ENCODE measurements at regions of chr1 and their contacts with region 1.

Region 1: GRCh38 chr1:205977402-205978014 is 25.7 kb downstream of the RAB7B start:
- H3K4me3 ChIP-seq: no peak overlapping the region
- H3K27ac ChIP-seq: no peak overlapping the region
- H3K4me1 ChIP-seq: no peaks in the 10 kb centered on the region
- CTCF ChIP-seq: peak; percentile 88

Region 2: GRCh38 chr1:205658943-205659581 is 318.4 kb before region 1 on chr1:
- CTCF ChIA-PET with region 1: interaction called, 82 read pairs
- POLR2A ChIA-PET with region 1: interaction called, 4 read pairs
- H3K4me3 ChIP-seq: no peak overlapping the region
- H3K27ac ChIP-seq: no peak overlapping the region
- H3K4me1 ChIP-seq: no peaks in the 10 kb centered on the region
- CTCF ChIP-seq: peak; percentile 87

Region 3: DNA sequence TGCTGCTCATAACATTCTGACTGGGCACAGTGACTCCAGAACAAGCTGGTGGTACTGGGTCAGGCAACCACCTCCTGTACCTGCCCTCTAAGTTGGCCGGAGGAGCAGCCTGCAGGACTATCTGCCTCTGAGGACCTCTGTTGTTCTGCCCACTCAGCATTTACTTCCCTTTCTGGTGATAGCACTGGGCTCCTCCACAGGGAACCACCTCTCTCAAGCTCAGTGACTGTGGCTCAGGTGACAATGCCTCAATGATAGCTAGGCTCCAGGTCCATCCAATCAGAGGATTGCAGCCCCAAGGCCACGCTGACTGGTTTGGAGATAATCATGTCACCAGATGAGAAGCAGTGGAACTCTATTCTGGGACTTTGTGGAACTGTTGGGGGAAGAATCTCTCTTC is 180.3 kb before region 1 on chr1:
- CTCF ChIA-PET with region 1: interaction called, 155 read pairs
- POLR2A ChIA-PET with region 1: no interaction called
- H3K4me3 ChIP-seq: no peak overlapping the region
- H3K27ac ChIP-seq: no peak overlapping the region
- H3K4me1 ChIP-seq: no peaks in the 10 kb centered on the region
- CTCF ChIP-seq: no peak

Region 4: DNA sequence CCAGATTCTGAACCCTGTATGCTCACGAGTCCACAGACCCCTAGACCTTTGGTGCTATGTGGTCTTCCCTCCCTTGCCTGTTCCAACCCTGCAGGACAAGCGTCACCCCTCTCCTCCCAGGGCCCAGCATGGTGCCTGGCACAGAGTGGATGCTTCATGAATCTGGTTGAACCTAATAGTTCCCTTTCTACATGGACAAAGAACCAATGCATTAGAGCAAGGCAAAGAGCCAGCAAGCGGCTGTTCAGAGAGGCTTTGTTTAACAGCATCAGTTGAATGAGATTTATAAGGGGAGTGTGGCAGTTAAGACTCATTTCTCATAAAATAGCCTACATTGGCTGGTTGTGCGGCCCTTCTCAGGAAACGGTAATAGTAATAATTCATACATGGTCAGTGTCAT is 49.2 kb before region 1 on chr1:
- CTCF ChIA-PET with region 1: interaction called, 527 read pairs
- POLR2A ChIA-PET with region 1: interaction called, 3 read pairs
- H3K4me3 ChIP-seq: no peak overlapping the region
- H3K27ac ChIP-seq: no peak overlapping the region
- H3K4me1 ChIP-seq: no peaks in the 10 kb centered on the region
- CTCF ChIP-seq: no peak

Region 5: DNA sequence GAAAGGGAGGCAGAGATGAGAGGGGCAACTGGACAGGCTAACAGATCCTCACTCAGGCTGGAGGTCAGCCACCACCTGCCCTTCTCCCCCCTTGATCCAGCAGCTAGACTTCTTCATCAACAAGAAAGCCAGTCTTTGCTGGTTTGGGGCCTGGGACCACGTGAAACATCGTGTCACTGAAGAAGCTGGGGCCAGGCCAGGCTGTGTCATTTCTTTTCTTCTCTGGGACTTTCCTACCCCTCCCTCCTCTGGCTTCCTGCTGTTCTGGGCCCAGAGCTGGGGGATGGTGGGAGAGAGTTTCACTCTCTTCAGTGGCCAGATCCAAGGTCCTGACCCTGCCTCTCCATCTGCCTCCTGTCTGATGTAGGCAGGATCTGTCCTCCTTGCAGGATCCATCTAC is 16.1 kb before region 1 on chr1:
- CTCF ChIA-PET with region 1: interaction called, 39 read pairs
- POLR2A ChIA-PET with region 1: no interaction called
- H3K4me3 ChIP-seq: no peak overlapping the region
- H3K27ac ChIP-seq: peak overlapping the region; percentile 22; the same call in 1 of the 2 replicates
- H3K4me1 ChIP-seq: peaks cover 9% of the 10 kb centered on the region
- CTCF ChIP-seq: no peak

Region 6: DNA sequence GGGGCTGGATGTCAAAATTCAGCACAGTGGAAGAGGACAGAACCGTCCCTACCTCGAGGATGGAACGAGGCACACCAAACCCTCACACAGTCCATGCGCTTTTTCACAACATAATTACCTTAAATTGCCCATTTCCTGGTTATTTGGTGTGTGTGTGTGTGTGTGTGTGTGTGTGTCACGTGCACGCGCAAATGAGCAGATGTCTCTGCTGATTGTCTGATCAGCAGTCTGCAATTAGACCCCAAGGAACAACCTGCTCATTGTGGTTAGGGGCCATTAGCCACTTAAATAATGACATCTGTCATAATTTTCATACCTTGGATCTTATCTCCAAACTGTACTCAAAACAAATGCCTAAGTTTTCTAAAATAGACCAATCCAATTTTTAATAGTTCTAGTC is 116.5 kb after region 1 on chr1:
- CTCF ChIA-PET with region 1: interaction called, 18 read pairs
- POLR2A ChIA-PET with region 1: no interaction called
- H3K4me3 ChIP-seq: no peak overlapping the region
- H3K27ac ChIP-seq: no peak overlapping the region
- H3K4me1 ChIP-seq: no peaks in the 10 kb centered on the region
- CTCF ChIP-seq: no peak

Measured in HEK293 (cell line).